Left colon (tissue), 2 donors: ENCODE measurements at regions of chr1 and their contacts with region 1.

Region 1: GRCh38 chr1:35769759-35770446 is at the start of gene CLSPN:
- DNase-seq: peak; percentile 95
- ATAC-seq: peak; percentile 95
- total RNA-seq, gene CLSPN: 1.9 to 4.3 TPM

Region 2: GRCh38 chr1:35434703-35435102 is 335.2 kb before region 1 on chr1:
- intact Hi-C with region 1: no loop called
- DNase-seq: no peak
- ATAC-seq: no peak

Region 3: DNA sequence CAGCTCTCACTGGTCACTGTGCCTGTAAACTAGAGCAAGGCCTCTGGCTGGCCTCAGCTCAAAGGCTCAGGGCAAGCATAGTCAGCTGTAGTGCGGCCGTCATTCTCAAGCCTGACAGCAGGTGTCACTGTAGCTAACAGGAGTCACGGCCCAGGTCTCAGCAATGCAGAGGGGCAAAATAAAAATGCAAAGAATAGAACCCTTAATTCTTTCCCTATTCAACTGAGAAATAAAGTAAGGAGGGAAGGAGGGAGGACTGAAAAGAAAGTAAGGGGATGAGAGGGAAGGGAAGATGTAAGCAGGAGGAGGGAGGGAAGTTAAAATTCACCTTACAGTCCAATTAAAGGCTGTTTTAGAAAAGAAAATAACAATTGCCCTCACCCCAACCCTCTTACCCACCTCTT is 318.8 kb before region 1 on chr1:
- intact Hi-C with region 1: loop called in 1 of 2 experiments (anchors 5 kb)
- DNase-seq: peak; percentile 59 to 87
- ATAC-seq: peak; percentile 89